Activated B cell treated with CpG ODN at 0.5 μM for 24 hours (primary cell): ENCODE measurements at regions of chr9 and their contacts with region 1.

Region 1: DNA sequence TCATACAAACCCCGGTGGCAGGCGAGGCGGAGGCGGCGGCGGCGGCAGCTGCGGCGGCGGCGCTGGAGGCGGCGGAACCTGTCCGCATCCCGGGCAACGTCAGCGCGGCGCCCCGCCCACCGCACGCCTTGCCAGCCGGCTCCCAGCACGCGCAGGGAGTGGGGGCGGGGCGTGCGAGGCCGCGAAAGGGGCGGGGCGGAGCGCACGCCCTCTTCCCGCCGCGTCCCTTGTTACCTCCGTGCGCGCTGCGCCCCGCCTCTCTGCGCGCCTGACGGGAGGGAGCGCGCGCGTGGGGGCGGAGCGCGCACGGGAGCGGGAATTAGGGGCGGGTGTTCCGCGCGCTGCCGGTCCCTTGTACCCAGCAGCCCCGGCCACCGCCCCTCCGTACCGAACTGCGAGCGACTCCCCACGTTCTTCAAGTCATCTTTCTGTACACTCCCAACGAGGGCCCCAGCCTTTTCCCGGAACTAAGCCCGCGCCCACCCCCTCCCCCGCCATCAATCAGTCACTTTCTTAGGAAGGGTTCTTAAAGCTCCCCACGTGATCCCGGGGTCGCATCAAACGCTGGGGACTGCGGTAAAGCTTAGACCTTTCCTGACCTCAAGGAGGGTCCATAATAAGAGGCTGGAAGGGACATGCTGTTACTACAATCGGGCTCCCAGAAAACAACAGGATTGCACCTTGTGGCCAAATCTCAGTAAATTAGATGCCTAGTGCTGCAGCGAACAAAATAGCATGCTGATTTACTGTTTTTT is at the start of gene AGTPBP1:
- DNase-seq: peak; percentile 99
- ATAC-seq: peak; percentile 92
- H3K4me3 Mint-ChIP-seq: peak within 1 kb of the TSS; percentile 93
- H3K27ac Mint-ChIP-seq: peak within 1 kb of the TSS; percentile 90
- H3K4me1 Mint-ChIP-seq: peaks cover 22% of the 10 kb centered on the region
- H3K27me3 Mint-ChIP-seq: peaks cover 8% of the 10 kb centered on the region
- CTCF ChIP-seq: no peak
- total RNA-seq, gene AGTPBP1: 25.9 and 26.7 TPM in 2 replicates

Region 2: DNA sequence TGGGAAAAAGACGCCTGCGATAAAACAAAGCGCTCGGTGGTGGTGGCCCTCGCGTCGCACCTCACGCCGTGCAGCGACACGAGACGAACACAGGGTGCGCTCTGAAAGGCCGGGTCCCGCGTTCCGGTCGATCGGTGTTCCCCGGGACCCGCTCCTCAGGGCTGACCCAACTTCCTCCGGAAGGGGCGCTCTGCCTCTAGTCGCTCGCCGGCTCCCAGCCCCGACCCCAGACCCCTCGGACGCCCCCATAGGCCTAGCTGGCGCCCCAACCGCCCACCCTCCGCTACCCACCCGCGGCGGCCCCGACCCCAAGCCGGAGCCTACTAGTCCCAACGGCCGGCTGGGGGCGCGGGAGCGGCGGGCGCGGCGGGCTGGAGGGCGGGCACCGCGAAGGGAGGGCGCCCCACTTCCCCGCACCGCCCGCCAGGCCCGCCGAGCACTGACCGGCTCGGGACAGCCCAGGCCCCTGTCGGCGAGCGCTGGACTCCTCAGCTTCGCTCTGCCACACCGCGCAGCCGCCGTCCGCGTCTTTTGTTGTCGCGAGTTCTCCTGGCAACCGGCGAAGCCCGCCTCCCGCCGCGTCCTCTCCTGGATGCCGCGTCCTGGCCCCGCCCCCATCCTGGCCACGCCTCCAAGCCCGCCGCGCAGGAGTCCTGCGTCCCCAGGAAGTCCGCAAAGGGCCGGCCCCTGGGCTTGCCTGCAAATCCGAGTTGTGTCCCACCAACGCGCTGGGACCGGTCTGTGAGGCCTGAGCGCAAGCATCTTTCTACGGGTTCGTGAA is 1820.9 kb before region 1 on chr9 and contains the start of gene KIF27:
- CTCF ChIA-PET with region 1: no interaction called
- POLR2A ChIA-PET with region 1: interaction called, 3 read pairs
- intact Hi-C with region 1: loop called (anchors 1 kb)
- DNase-seq: peak; percentile 99
- ATAC-seq: peak; percentile 85
- H3K4me3 Mint-ChIP-seq: peak within 1 kb of the TSS; percentile 91
- H3K27ac Mint-ChIP-seq: peak within 1 kb of the TSS; percentile 94
- H3K4me1 Mint-ChIP-seq: peaks cover 19% of the 10 kb centered on the region
- H3K27me3 Mint-ChIP-seq: no peaks in the 10 kb centered on the region
- CTCF ChIP-seq: no peak
- total RNA-seq, gene KIF27: 4.9 and 5.1 TPM in 2 replicates

Region 3: DNA sequence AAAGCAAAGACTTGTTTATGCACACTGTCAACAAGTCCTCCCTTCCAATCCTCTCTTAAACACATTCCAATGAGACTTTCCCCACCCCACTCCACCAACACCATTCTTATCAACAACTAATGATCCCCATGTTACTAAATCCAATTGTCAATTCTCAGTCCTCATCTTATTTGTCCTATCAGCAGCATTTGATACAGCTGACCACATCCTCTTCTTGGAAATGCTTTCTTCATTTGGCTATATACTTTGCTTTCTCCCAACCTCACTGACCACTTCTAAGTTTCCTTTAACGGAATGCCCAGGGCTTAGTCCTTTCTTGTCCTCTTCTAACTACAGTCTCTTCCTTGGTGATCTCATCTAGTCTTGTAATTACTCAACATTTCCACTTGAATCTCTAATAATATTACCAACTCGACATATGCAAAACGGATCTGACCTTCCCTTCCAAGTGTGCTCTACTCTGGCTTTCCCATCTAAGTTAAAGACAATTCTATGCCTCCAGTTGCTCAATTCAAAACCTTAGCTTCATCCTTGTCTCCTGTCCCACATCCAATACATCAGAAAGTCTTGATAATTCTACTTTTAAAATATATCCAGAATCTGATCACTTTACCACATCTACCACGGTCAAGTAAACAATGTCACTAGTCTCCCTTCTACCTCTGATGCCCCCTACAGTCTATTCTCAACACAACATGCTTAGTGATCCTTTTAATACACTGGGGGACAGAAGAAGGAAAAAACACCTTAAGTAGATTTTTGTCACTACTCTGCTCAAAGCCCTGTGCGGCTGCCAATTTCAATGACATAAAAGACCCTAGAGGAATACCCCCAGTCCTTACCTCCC is 25.8 kb before region 1 on chr9:
- CTCF ChIA-PET with region 1: interaction called, 9 read pairs
- POLR2A ChIA-PET with region 1: interaction called, 5 read pairs
- intact Hi-C with region 1: loop called (anchors 1 kb)
- DNase-seq: no peak
- ATAC-seq: peak; percentile 43
- H3K4me3 Mint-ChIP-seq: peak overlapping the region; percentile 40
- H3K27ac Mint-ChIP-seq: peak overlapping the region; percentile 78
- H3K4me1 Mint-ChIP-seq: peaks cover 55% of the 10 kb centered on the region
- H3K27me3 Mint-ChIP-seq: no peaks in the 10 kb centered on the region
- CTCF ChIP-seq: no peak

Region 4: GRCh38 chr9:85940832-85941621 is 199.0 kb after region 1 on chr9 and contains the start of gene NAA35:
- CTCF ChIA-PET with region 1: no interaction called
- POLR2A ChIA-PET with region 1: no interaction called
- intact Hi-C with region 1: loop called (anchors 1 kb)
- DNase-seq: peak; percentile 97
- ATAC-seq: peak; percentile 87
- H3K4me3 Mint-ChIP-seq: peak within 1 kb of the TSS; percentile 84
- H3K27ac Mint-ChIP-seq: peak within 1 kb of the TSS; percentile 86
- H3K4me1 Mint-ChIP-seq: peaks cover 18% of the 10 kb centered on the region
- H3K27me3 Mint-ChIP-seq: peaks cover 4% of the 10 kb centered on the region
- CTCF ChIP-seq: no peak
- total RNA-seq, gene NAA35: 16.5 and 18.9 TPM in 2 replicates

Region 5: GRCh38 chr9:86009133-86009532 is 267.1 kb after region 1 on chr9:
- CTCF ChIA-PET with region 1: no interaction called
- POLR2A ChIA-PET with region 1: no interaction called
- intact Hi-C with region 1: no loop called
- DNase-seq: no peak
- ATAC-seq: no peak
- H3K4me3 Mint-ChIP-seq: no peak overlapping the region
- H3K27ac Mint-ChIP-seq: no peak overlapping the region
- H3K4me1 Mint-ChIP-seq: no peaks in the 10 kb centered on the region
- H3K27me3 Mint-ChIP-seq: no peaks in the 10 kb centered on the region
- CTCF ChIP-seq: no peak

Region 6: DNA sequence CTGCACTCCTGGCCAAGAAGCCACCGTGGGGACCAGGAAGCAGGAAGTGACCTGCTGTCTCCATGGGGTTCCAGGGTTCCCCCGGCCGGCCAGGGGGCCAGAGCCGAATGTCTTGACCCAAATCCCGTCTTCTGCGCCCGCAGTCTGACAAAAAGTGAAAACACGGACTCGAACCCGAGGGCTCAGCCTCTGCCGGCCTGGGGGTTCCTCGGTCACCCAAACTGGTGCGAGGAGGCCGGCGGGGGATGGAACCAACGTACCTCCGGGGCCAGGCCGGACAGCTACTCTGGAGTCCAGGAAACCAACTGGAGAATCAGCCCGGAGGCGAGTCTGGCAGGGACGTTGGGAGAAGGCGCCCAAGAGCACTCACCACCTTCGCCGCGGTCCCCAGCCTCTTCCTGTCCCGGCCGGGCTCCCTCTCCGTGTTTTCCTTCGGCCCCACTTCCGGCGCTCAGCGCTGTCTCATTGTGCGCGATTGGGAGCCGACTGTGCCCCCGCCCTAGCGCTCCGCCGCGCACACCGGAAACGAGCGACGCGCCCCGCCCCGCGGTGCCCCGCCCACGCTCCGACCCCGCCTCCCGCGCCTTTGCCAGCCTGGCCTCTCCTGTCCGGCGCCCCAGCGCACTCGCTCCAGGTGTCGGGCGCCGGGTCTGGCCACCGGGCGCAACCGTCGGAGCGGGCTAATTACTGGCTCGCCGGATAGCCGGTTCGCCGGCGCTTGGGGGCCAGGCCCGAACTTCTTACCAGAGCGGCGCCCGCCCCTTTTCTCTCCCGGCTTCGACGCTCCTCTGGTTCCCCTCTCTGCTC is 612.2 kb after region 1 on chr9 and contains the start of gene TUT7:
- CTCF ChIA-PET with region 1: no interaction called
- POLR2A ChIA-PET with region 1: no interaction called
- intact Hi-C with region 1: loop called (anchors 1 kb)
- DNase-seq: peak; percentile 98
- ATAC-seq: peak; percentile 88
- H3K4me3 Mint-ChIP-seq: peak within 1 kb of the TSS; percentile 93
- H3K27ac Mint-ChIP-seq: peak within 1 kb of the TSS; percentile 92
- H3K4me1 Mint-ChIP-seq: peaks cover 51% of the 10 kb centered on the region
- H3K27me3 Mint-ChIP-seq: no peaks in the 10 kb centered on the region
- CTCF ChIP-seq: no peak
- total RNA-seq, gene TUT7: 43.8 and 50.4 TPM in 2 replicates